Mammary epithelial cell (primary cell): ENCODE measurements at regions of chr11 and their contacts with region 1.

Region 1: GRCh38 chr11:76891278-76891677 is 30.6 kb downstream of the ACER3 start:
- DNase-seq: peak; percentile 20
- H3K4me3 ChIP-seq: no peak overlapping the region
- H3K27ac ChIP-seq: no peak overlapping the region
- H3K4me1 ChIP-seq: peaks cover 4% of the 10 kb centered on the region
- H3K27me3 ChIP-seq: no peaks in the 10 kb centered on the region
- CTCF ChIP-seq: no peak

Region 2: GRCh38 chr11:76835928-76836612 is 55.2 kb before region 1 on chr11:
- CTCF ChIA-PET with region 1: no interaction called
- dilution Hi-C with region 1: loop called (anchors 5 kb)
- in situ Hi-C with region 1: no loop called
- intact Hi-C with region 1: no loop called
- DNase-seq: no peak
- H3K4me3 ChIP-seq: no peak overlapping the region
- H3K27ac ChIP-seq: no peak overlapping the region
- H3K4me1 ChIP-seq: peaks cover 25% of the 10 kb centered on the region
- H3K27me3 ChIP-seq: no peaks in the 10 kb centered on the region
- CTCF ChIP-seq: no peak